Thyroid gland (tissue), 4 donors: ENCODE measurements at regions of chr9 and their contacts with region 1.

Region 1: DNA sequence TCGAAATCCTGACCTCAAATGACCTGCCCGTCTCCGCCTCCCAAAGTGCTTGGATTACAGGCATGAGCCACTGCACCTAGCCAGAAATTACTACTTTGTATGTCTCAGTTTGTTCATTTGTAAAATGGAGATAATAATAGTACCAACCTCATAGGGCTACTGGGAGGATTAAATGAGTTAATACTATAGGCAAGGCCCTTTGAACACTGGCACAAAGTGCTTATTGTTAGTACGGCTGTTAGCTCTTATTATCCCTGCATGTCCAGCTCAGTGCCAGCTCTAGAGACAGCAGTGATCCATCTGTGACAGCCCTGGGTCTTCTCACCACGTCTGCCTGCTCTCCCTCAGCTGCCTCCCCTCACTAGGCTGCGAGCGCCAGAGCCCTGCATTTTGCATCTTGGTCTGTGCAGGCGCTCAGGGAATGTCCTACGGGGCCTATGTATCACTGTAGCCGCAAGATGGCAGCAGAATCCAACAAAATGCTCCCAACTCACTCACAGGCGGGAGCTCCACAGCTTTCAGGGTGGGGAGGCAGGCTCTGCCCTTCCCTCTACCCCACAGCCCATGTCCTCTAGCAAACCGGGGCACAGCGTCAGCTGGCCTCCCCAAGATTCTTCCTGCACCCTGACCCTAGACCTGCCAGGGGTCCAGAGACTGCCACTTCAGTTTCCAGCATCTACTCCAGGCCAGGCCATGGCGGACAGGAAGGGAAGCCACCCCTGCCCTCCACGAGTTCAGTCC is 17.7 kb upstream of the AKNA start:
- DNase-seq: peak; percentile 68 to 73
- H3K4me3 ChIP-seq: no peak overlapping the region
- H3K27ac ChIP-seq: no peak overlapping the region
- H3K4me1 ChIP-seq: no peaks in the 10 kb centered on the region
- H3K27me3 ChIP-seq: no peaks in the 10 kb centered on the region
- CTCF ChIP-seq: peak; percentile 32 to 79 (median 76)
- POLR2A ChIP-seq: no peak

Region 2: DNA sequence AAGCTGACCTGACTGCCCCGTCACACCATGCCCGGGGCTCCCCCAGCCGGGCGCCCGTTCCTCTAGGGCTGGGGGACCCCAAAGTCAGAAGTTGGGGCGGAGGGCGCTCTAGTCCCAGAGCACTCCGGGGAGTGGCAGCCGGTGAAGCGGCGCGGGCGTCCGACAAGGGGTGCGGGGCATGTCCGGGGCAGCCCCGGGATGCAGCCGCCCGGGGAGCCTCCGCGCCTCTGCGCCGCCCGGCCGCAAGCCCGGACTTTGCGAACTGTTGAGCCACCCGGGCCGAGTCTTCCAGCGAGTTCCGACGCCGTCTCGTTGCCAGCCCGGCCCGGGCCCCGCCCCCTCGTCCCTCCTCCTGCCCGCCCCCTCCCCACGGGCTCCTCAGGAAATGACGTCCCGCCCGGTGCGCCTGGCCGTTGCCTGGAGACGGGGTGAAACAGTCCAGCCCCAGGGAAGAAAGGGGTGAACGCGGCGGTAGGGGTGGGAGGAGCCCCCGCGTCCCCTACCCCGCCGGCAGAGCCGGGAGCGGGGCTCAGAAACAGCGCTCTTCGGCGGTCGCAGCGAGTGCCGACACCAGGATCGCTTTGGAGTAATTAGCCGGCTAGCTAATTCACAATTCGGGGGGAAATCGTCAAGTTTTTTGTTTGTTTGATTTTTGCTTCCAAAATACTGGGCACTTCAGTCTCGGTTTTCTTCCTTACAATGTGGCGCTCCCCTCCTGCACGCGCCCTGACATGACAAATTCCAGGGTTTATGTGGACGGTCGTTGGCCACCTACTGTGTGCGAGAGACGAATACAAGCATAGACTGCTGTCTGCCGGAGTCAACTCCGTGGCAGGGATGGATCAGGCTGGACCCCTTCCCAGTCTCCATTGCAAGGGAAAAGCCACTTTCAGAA is 100.0 kb after region 1 on chr9 and contains the start of gene WHRN:
- intact Hi-C with region 1: loop called (anchors 10 kb)
- DNase-seq: peak; percentile 94 to 95
- H3K4me3 ChIP-seq: peak within 1 kb of the TSS; percentile 34 to 80 (median 77)
- H3K27ac ChIP-seq: peak within 1 kb of the TSS; percentile 48 to 74 (median 64)
- H3K4me1 ChIP-seq: peaks cover 25 to 27% of the 10 kb centered on the region in 2 donors
- H3K27me3 ChIP-seq: no peaks in the 10 kb centered on the region
- CTCF ChIP-seq: no peak
- POLR2A ChIP-seq: peak in 1 of 2 donors; percentile 79
- total RNA-seq, gene WHRN: 7.4 to 13.0 (median 10.9) TPM

Region 3: DNA sequence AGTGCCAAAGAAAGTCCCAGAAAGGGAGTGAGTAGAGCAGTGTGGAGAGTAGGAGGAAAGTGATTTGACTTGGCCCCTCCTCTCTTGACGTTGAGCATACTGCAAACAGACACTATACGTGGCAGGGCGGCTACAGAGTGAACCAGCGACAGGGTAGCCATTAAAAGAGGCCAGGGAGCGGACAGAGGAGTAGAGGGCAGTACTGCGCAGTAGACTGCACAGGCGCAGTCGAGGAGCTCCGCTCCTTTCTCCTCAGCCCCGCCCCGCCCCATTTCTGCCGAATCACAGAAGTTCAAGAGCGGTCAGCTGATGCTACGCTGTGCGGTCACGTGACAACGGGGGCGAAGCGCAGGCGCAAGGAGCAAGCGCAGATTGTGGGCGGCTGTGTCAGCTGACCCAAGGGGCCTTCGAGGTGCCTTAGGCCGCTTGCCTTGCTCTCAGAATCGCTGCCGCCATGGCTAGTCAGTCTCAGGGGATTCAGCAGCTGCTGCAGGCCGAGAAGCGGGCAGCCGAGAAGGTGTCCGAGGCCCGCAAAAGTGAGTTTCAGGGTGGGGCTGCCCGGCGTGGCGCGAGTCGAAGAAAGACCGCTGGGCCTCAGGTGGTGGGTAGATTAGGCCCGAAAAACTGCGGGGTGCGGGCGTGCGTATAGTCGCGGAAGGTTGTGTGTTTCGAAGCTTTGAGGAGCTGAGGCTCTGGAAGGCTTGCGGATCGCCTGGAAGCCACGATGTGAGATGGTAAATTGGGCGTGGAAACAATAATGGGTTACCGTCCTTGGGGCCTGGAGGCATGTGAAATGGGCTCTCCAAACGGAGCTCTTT is 182.1 kb after region 1 on chr9 and contains the start of gene ATP6V1G1:
- intact Hi-C with region 1: loop called (anchors 10 kb)
- DNase-seq: peak; percentile 100
- H3K4me3 ChIP-seq: peak within 1 kb of the TSS; percentile 65 to 99 (median 79)
- H3K27ac ChIP-seq: peak within 1 kb of the TSS; percentile 60 to 96 (median 77)
- H3K4me1 ChIP-seq: peaks cover 21 to 32% of the 10 kb centered on the region in 2 donors
- H3K27me3 ChIP-seq: no peaks in the 10 kb centered on the region
- CTCF ChIP-seq: peak in 2 of 6 experiments; percentile 34 to 37
- POLR2A ChIP-seq: peak; percentile 2 to 97
- total RNA-seq, gene ATP6V1G1: 193 to 223 (median 200) TPM

Region 4: DNA sequence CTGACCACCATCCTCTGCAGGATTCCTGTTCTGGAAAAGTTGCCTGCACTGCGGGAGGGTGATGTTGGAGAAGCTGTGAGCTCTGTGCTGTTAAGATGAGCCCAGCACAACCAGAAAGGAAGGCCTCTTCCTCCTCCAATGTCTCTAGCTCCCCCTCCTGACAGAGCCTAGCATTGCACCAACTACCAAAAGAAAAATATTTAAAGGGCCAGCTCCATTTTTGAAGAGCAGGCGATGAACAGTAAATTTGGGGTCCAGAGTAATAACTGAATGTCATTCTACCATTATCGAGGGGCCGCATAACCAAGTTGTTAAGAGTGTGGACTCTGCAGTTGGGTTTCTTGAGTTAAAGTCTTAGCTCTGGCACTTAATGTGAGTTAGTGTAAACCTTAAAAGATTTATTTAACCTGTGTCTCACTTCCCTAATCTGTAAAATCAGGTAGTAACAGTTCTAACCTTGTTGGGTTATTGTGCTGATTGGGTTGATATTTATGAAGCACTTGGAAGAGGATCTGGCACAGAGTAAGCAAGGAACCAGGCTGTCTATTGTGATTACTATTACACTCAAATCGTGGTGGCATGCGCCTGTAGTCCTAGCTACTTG is 248.2 kb after region 1 on chr9:
- intact Hi-C with region 1: loop called (anchors 5 kb)
- DNase-seq: peak; percentile 69 to 78
- H3K4me3 ChIP-seq: no peak overlapping the region
- H3K27ac ChIP-seq: no peak overlapping the region
- H3K4me1 ChIP-seq: peaks cover 0 to 3% of the 10 kb centered on the region in 2 donors
- H3K27me3 ChIP-seq: no peaks in the 10 kb centered on the region
- CTCF ChIP-seq: peak; percentile 53 to 96 (median 90)
- POLR2A ChIP-seq: no peak